Activated CD4-positive, alpha-beta T cell treated with anti-CD3 and anti-CD28 coated beads for 36 hours (primary cell): ENCODE measurements at regions of chr3 and their contacts with region 1.

Region 1: DNA sequence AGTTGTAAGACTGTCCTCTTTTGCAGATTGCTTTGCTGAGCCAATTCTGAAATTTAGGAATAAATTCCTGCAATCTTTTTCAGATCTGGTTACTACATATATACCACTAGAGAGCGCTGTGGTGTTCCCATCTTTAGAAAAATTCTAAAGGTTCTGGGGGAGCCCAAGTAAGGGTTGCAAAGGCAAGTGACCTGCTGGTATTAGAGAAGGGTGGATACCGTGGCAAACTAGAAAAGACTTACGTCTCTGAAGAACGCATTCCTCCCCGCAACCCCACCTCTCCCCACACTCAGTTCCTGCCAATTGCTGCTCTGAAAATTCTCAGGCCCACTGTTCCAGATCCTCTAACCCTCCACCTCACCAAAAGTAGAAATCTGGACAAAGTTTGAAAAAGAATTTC is 48.5 kb downstream of the EFHB start:
- DNase-seq: peak; percentile 9
- ATAC-seq: peak; percentile 36
- H3K4me3 Mint-ChIP-seq: no peak overlapping the region
- H3K27ac Mint-ChIP-seq: no peak overlapping the region
- H3K4me1 Mint-ChIP-seq: no peaks in the 10 kb centered on the region
- H3K27me3 Mint-ChIP-seq: no peaks in the 10 kb centered on the region

Region 2: DNA sequence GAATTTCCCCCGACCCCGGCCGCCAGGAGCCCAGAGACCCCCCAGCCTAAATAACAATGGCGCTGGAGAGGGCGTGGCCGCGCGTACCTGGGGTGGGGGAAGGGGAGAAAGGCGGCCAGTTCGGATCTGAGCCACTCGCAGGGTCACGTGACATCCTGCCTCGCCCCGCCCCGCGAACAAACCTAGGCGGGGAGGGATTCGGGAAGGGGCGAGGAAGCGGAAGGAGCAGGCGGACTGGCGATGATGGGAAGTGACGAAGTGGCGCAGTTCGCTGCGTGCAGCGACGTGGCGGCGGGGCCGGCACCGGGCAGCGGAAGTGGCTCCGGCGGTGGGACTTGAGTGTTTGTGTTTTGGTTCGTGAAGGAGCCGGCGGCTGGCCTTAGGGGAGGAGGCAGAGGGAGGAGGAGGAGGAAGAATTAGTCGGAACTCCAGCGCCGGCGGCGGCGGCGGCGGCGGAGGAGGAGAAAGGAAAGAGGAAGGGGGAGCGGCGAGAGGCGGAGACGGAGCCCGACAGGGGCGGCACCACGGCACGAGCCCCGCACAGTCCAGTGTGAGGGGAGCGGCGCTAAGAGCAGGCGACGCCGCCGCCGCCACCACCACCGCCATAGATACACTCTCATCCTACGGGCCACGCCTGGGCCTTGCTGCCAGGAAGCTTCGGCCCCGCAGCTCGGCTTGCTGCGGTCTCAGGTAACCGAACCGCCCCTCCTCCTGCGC is 61.5 kb after region 1 on chr3 and contains the start of gene RAB5A:
- CTCF ChIA-PET with region 1: interaction called, 3 read pairs
- POLR2A ChIA-PET with region 1: no interaction called
- intact Hi-C with region 1: loop called in 1 of 2 experiments (anchors 5 kb)
- DNase-seq: peak; percentile 99
- ATAC-seq: peak; percentile 90
- H3K4me3 Mint-ChIP-seq: peak within 1 kb of the TSS; percentile 96
- H3K27ac Mint-ChIP-seq: peak within 1 kb of the TSS; percentile 99
- H3K4me1 Mint-ChIP-seq: peaks cover 40% of the 10 kb centered on the region
- H3K27me3 Mint-ChIP-seq: no peaks in the 10 kb centered on the region
- total RNA-seq, gene RAB5A: 54.2 to 78.8 TPM

Region 3: DNA sequence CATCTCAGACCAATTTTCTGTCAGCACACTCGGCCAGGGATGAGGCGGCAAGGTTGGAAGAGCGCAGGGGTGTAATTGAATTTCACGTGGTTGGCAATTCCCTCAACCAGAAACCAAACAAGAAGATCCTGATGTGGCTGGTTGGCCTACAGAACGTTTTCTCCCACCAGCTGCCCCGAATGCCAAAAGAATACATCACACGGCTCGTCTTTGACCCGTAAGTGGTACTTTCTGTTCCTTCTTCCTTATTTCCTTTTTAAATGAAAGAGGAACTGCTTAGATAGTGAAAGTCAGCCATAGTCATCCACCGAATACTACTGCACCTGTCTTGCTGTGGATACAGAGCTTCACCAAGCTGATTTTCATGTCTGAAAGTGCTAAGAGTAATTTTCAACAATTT is 240.4 kb after region 1 on chr3:
- CTCF ChIA-PET with region 1: interaction called, 3 read pairs
- POLR2A ChIA-PET with region 1: no interaction called
- intact Hi-C with region 1: loop called in 1 of 2 experiments (anchors 10 kb)
- DNase-seq: no peak
- ATAC-seq: no peak
- H3K4me3 Mint-ChIP-seq: no peak overlapping the region
- H3K27ac Mint-ChIP-seq: no peak overlapping the region
- H3K4me1 Mint-ChIP-seq: no peaks in the 10 kb centered on the region
- H3K27me3 Mint-ChIP-seq: no peaks in the 10 kb centered on the region